ENCODE measurements at regions of chr18 and their contacts with region 1.

Region 1: DNA sequence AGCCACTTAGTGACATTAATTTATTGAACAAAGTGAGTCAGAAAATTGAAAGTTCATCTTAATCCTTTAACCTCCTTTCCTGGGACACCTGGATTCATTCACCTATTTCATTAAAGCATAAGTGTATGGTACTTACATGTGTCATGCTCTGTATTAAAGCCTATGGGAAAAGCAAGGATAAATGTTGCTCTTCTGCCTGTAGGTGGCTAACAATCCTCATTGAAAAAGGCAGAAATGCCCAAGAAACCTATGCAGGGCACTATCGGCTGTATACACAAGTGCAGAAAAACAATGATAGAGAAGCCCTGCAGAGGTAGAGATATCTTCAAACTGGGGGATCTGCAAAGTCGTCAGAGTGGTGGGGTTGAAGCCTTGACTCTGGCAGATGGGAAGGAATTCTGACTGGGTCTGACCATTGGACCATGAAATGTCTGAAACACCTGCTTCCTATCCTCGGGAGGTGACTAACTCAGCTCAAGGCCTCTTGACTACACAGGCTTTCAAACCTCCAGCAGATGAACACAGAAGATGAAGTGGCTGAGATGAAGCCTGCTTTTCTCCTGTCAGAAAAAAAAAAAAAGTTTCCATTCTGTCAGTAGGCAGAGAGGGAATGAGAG is 83.1 kb downstream of the DCC start:
- DNase-seq: peak; percentile 83
- H3K4me3 ChIP-seq: no peak overlapping the region
- H3K27ac ChIP-seq: peak overlapping the region; percentile 99
- H3K4me1 ChIP-seq: peaks cover 90% of the 10 kb centered on the region
- H3K27me3 ChIP-seq: no peaks in the 10 kb centered on the region
- CTCF ChIP-seq: peak; percentile 58

Region 2: DNA sequence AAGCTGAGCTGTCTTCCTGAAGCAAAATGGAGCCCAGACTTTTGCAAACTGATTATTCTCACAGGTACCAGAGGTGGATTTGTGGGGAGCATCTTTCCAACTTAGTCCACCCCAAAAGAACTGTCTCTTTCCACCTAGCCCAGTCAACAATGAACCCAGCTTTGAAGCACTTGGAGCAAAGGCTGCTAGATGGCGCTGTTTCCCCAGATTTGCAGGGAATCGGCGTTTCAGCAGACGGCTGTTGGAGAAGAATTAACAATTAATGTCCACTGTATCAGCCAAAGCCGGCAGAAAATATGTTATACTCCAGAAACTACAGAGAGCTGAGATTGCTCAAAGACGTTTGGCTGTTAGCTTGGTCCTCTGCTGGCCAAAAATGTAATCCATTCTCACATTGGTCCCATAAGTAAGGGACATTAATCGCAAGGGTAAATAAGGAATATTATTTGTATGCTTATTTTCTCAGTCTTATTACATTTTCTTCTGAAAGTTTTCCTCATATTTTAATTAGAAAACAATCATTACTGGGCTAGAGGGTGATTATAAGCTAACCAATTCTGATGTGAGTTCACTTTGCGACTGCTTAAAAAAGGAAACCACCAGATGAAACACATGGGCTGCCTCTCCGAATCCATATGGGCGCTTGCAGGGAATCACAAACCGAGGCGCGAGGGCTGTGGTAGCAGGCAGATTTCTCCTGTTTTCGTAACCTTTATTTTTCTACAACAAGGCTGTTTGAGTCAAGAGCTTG is 801.8 kb before region 1 on chr18:
- CTCF ChIA-PET with region 1: no interaction called
- POLR2A ChIA-PET with region 1: no interaction called
- intact Hi-C with region 1: loop called (anchors 10 kb)
- DNase-seq: peak; percentile 85
- H3K4me3 ChIP-seq: no peak overlapping the region
- H3K27ac ChIP-seq: no peak overlapping the region
- H3K4me1 ChIP-seq: peaks cover 14% of the 10 kb centered on the region
- H3K27me3 ChIP-seq: no peaks in the 10 kb centered on the region
- CTCF ChIP-seq: peak; percentile 88

Region 3: GRCh38 chr18:52439457-52439856 is 16.4 kb after region 1 on chr18:
- CTCF ChIA-PET with region 1: no interaction called
- POLR2A ChIA-PET with region 1: interaction called, 33 read pairs
- intact Hi-C with region 1: no loop called
- DNase-seq: no peak
- H3K4me3 ChIP-seq: no peak overlapping the region
- H3K27ac ChIP-seq: no peak overlapping the region
- H3K4me1 ChIP-seq: peaks cover 83% of the 10 kb centered on the region
- H3K27me3 ChIP-seq: no peaks in the 10 kb centered on the region
- CTCF ChIP-seq: no peak

Region 4: DNA sequence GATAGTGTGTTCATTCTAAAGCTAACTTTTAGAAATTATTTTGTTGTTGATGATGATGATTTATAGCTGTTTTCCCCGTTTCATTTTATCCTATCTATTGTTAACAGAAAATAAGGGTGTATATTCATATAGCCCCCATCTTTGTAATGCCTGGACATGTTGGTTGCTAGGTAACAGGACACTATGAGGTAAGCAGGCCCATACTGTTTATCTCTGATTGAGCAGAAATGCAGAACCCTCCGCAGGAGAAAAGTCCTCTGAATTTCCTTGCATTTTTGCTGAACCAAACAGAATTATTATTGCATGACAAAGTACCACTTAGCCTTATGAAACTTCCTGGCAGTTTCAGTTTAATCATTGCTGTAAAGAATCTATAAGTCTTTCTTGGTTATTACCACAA is 256.3 kb after region 1 on chr18:
- CTCF ChIA-PET with region 1: no interaction called
- POLR2A ChIA-PET with region 1: no interaction called
- intact Hi-C with region 1: loop called (anchors 5 kb)
- DNase-seq: peak; percentile 73
- H3K4me3 ChIP-seq: no peak overlapping the region
- H3K27ac ChIP-seq: peak overlapping the region; percentile 67
- H3K4me1 ChIP-seq: peaks cover 77% of the 10 kb centered on the region
- H3K27me3 ChIP-seq: no peaks in the 10 kb centered on the region
- CTCF ChIP-seq: no peak

Region 5: DNA sequence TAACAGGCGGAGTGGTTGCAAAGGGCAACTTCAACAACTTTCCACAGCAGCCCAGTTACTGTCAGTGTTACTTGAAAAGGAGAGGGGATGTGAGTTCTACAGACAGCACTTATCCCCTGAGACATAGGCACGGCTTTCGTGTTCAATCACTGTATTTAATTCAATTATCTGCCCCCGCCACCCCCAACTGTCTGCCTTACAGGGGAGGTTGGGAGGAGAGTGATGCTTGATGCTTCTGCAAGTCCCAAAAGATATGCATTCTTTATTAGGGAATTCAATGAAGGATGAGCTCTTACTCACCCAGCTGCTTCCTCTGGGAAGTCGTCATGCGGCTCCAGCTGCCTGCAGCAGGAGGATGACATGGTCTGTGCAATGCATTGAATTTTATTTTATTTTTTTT is 556.8 kb after region 1 on chr18:
- CTCF ChIA-PET with region 1: interaction called, 5 read pairs
- POLR2A ChIA-PET with region 1: no interaction called
- intact Hi-C with region 1: loop called (anchors 10 kb)
- DNase-seq: peak; percentile 95
- H3K4me3 ChIP-seq: no peak overlapping the region
- H3K27ac ChIP-seq: no peak overlapping the region
- H3K4me1 ChIP-seq: peaks cover 28% of the 10 kb centered on the region
- H3K27me3 ChIP-seq: no peaks in the 10 kb centered on the region
- CTCF ChIP-seq: no peak

Measured in A673 (cell line).